CD4-positive, alpha-beta memory T cell (primary cell): ENCODE measurements at regions of chr18 and their contacts with region 1.

Region 1: GRCh38 chr18:59085797-59086196 is 53.9 kb upstream of the SEC11C start:
- DNase-seq: no peak
- H3K4me3 ChIP-seq: no peak overlapping the region
- H3K4me3 Mint-ChIP-seq: no peak overlapping the region
- H3K27ac ChIP-seq: no peak overlapping the region
- H3K27ac Mint-ChIP-seq: no peak overlapping the region
- H3K4me1 ChIP-seq: peaks cover 18% of the 10 kb centered on the region
- H3K4me1 Mint-ChIP-seq: peaks cover 8 to 18% (median 12%) of the 10 kb centered on the region in 4 donors
- H3K27me3 ChIP-seq: peaks cover 10% of the 10 kb centered on the region
- H3K27me3 Mint-ChIP-seq: peaks cover 15 to 20% of the 10 kb centered on the region in 2 donors

Region 2: GRCh38 chr18:58831606-58832005 is 254.2 kb before region 1 on chr18:
- CTCF ChIA-PET with region 1: no interaction called
- POLR2A ChIA-PET with region 1: no interaction called
- intact Hi-C with region 1: no loop called
- DNase-seq: no peak
- H3K4me3 ChIP-seq: no peak overlapping the region
- H3K4me3 Mint-ChIP-seq: no peak overlapping the region
- H3K27ac ChIP-seq: no peak overlapping the region
- H3K27ac Mint-ChIP-seq: no peak overlapping the region
- H3K4me1 ChIP-seq: no peaks in the 10 kb centered on the region
- H3K4me1 Mint-ChIP-seq: no peaks in the 10 kb centered on the region
- H3K27me3 ChIP-seq: no peaks in the 10 kb centered on the region
- H3K27me3 Mint-ChIP-seq: peaks cover 11 to 19% of the 10 kb centered on the region in 2 donors

Region 3: DNA sequence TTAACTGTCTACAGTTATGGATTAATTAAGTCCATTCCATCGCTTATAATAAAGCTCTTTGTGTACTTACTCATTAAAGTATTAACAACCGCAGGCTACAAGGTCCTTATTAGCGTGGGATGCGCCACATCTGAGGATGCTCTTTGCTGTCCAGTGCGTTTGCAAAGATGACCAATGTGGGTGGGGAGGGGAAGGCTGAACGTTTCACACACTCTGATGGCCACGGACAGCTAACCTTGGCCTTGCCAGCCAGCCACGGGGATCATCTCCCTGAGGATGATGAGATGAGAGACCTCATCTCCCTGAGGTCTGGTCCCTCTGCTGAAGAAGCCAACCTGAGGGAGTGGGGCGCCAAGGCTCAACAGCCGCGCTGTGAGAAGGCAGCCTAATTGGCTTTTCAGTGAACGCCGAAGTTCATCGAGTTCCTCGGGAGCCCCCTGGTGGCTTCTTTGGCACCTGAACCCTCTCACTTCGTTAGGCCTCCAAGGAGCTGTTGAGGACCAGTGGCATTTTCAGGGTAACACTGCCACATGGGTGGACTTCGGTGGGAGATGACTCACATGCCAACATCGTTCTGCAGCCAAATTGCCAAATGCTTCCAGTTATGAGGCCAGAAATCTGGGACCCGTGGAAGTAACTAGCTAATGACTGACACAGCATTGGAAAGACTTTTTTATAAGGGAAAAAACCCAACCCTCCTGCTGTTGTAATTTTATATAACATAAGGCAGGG is 15.4 kb before region 1 on chr18:
- CTCF ChIA-PET with region 1: interaction called, 59 read pairs
- POLR2A ChIA-PET with region 1: no interaction called
- intact Hi-C with region 1: no loop called
- DNase-seq: peak; percentile 60 to 70 (median 61)
- H3K4me3 ChIP-seq: no peak overlapping the region
- H3K4me3 Mint-ChIP-seq: no peak overlapping the region
- H3K27ac ChIP-seq: no peak overlapping the region
- H3K27ac Mint-ChIP-seq: no peak overlapping the region
- H3K4me1 ChIP-seq: no peaks in the 10 kb centered on the region
- H3K4me1 Mint-ChIP-seq: peaks cover 0 to 1% (median 0%) of the 10 kb centered on the region in 4 donors
- H3K27me3 ChIP-seq: no peaks in the 10 kb centered on the region
- H3K27me3 Mint-ChIP-seq: peaks cover 0 to 1% of the 10 kb centered on the region in 2 donors

Region 4: GRCh38 chr18:59096098-59096789 is 10.4 kb after region 1 on chr18:
- CTCF ChIA-PET with region 1: interaction called, 20 read pairs
- POLR2A ChIA-PET with region 1: no interaction called
- intact Hi-C with region 1: no loop called
- DNase-seq: no peak
- H3K4me3 ChIP-seq: no peak overlapping the region
- H3K4me3 Mint-ChIP-seq: no peak overlapping the region
- H3K27ac ChIP-seq: no peak overlapping the region
- H3K27ac Mint-ChIP-seq: no peak overlapping the region
- H3K4me1 ChIP-seq: no peaks in the 10 kb centered on the region
- H3K4me1 Mint-ChIP-seq: no peaks in the 10 kb centered on the region
- H3K27me3 ChIP-seq: no peaks in the 10 kb centered on the region
- H3K27me3 Mint-ChIP-seq: peaks cover 14 to 34% of the 10 kb centered on the region in 2 donors

Region 5: DNA sequence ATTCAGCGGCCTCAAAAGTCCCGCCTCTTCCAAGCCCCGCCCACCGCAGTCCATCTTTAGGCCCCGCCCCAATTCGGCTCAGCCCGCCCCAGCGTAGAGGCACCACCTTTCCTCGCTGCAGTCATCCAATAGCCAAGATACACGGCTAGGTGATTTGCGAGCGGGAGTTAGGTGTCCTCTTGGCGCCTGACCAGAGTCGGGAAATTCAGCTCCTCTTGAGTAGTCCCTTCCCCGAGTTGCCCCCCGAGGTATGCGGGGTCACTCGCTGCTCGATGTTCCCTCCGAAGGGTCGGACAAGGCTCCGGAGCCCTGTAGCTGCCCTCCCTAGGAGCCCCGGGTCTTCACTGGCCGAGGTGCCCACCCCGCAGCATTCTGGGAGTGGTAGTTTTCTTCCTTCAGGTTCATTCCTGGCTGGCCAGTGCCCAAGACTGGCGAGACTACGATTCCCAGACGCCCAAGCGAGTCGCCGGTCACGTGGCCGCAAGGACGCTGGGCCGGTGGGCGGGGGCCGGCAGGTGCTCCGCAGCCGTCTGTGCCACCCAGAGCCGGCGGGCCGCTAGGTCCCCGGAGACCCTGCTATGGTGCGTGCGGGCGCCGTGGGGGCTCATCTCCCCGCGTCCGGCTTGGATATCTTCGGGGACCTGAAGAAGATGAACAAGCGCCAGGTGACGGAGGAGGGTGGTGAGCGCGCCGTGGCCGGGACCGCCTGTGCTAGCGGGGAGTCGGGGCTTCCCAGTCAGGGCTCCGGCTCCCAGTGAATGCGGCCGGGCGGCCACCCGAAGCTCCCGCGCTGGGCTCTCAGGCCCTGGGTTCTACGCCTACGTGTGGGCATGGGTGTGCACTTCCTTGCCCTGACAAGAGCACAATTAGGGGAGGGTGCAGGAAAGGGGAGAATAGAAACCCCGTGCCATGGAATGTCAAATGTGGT is 53.8 kb after region 1 on chr18 and contains the start of gene SEC11C:
- CTCF ChIA-PET with region 1: interaction called, 4 read pairs
- POLR2A ChIA-PET with region 1: interaction called, 3 read pairs
- intact Hi-C with region 1: loop called (anchors 1 kb)
- DNase-seq: peak; percentile 98 to 99 (median 98)
- H3K4me3 ChIP-seq: peak within 1 kb of the TSS; percentile 59 to 88
- H3K4me3 Mint-ChIP-seq: peak within 1 kb of the TSS; percentile 92 to 97 (median 95)
- H3K27ac ChIP-seq: peak within 1 kb of the TSS; percentile 91
- H3K27ac Mint-ChIP-seq: peak within 1 kb of the TSS; percentile 99 to 100 (median 100)
- H3K4me1 ChIP-seq: peaks cover 45% of the 10 kb centered on the region
- H3K4me1 Mint-ChIP-seq: peaks cover 29 to 53% (median 39%) of the 10 kb centered on the region in 4 donors
- H3K27me3 ChIP-seq: no peaks in the 10 kb centered on the region
- H3K27me3 Mint-ChIP-seq: peaks cover 6 to 7% of the 10 kb centered on the region in 2 donors
- total RNA-seq, gene SEC11C: 85.1 to 89.3 TPM